Activated B cell treated with CpG ODN at 0.5 μM for 24 hours (primary cell): ENCODE measurements at regions of chr1 and their contacts with region 1.

Region 1: GRCh38 chr1:220711056-220711809 is 21.1 kb downstream of the C1orf115 start:
- DNase-seq: no peak
- ATAC-seq: peak; percentile 84
- H3K4me3 Mint-ChIP-seq: peak overlapping the region; percentile 60
- H3K27ac Mint-ChIP-seq: peak overlapping the region; percentile 77
- H3K4me1 Mint-ChIP-seq: peaks cover 48% of the 10 kb centered on the region
- H3K27me3 Mint-ChIP-seq: no peaks in the 10 kb centered on the region
- CTCF ChIP-seq: no peak

Region 2: DNA sequence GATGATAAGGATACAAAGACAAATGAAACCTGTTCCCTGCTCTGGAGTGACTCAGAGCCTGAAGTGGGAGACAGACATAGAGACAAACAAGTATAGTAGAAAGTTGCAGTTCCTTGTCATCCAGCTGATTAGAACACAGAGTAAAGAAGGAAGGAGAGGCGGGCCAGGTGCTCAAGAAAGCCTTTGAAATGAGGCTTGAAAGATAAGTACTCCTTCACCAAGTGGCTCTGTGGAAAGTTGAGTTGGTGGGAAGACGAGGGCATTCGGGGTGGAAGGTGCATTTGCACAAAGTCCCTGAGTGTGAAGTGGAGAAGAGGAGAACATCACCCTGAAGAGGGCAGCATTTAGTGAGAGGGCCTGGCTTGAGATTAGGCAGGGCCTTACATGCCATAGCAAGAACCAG is 166.3 kb before region 1 on chr1:
- CTCF ChIA-PET with region 1: no interaction called
- POLR2A ChIA-PET with region 1: no interaction called
- intact Hi-C with region 1: no loop called
- DNase-seq: no peak
- ATAC-seq: no peak
- H3K4me3 Mint-ChIP-seq: no peak overlapping the region
- H3K27ac Mint-ChIP-seq: no peak overlapping the region
- H3K4me1 Mint-ChIP-seq: no peaks in the 10 kb centered on the region
- H3K27me3 Mint-ChIP-seq: peaks cover 10% of the 10 kb centered on the region
- CTCF ChIP-seq: no peak

Region 3: DNA sequence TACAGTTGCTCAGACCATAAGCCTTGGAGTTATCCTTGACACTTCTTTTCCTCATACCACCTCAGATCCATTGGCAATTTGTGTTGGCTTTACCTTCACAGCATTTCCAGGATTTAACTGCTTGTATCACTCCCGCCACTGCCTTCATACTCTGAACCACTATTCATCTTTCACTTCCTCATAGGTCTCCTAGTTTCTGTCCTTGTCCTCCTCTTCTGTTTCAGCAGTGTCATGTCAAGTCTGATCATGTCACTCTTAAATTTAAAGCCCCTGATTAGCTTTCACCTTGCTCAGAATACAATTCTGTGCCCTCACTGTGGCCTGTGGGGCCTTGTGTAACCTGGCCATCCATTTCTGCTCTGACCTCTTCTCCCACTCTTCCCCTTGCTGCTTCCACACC is 55.7 kb before region 1 on chr1:
- CTCF ChIA-PET with region 1: no interaction called
- POLR2A ChIA-PET with region 1: no interaction called
- intact Hi-C with region 1: no loop called
- DNase-seq: no peak
- ATAC-seq: no peak
- H3K4me3 Mint-ChIP-seq: no peak overlapping the region
- H3K27ac Mint-ChIP-seq: no peak overlapping the region
- H3K4me1 Mint-ChIP-seq: peaks cover 2% of the 10 kb centered on the region
- H3K27me3 Mint-ChIP-seq: peaks cover 2% of the 10 kb centered on the region
- CTCF ChIP-seq: no peak

Region 4: GRCh38 chr1:220690140-220691025 is 20.9 kb before region 1 on chr1 and contains the start of gene C1orf115:
- CTCF ChIA-PET with region 1: interaction called, 3 read pairs
- POLR2A ChIA-PET with region 1: interaction called, 4 read pairs
- intact Hi-C with region 1: loop called (anchors 1 kb)
- DNase-seq: peak; percentile 86
- ATAC-seq: peak; percentile 98
- H3K4me3 Mint-ChIP-seq: peak within 1 kb of the TSS; percentile 92
- H3K27ac Mint-ChIP-seq: peak within 1 kb of the TSS; percentile 68
- H3K4me1 Mint-ChIP-seq: peaks cover 26% of the 10 kb centered on the region
- H3K27me3 Mint-ChIP-seq: peaks cover 5% of the 10 kb centered on the region
- CTCF ChIP-seq: peak; percentile 90
- total RNA-seq, gene C1orf115: 19.6 and 20.0 TPM in 2 replicates